ENCODE measurements at regions of chr7 and their contacts with region 1.

Region 1: DNA sequence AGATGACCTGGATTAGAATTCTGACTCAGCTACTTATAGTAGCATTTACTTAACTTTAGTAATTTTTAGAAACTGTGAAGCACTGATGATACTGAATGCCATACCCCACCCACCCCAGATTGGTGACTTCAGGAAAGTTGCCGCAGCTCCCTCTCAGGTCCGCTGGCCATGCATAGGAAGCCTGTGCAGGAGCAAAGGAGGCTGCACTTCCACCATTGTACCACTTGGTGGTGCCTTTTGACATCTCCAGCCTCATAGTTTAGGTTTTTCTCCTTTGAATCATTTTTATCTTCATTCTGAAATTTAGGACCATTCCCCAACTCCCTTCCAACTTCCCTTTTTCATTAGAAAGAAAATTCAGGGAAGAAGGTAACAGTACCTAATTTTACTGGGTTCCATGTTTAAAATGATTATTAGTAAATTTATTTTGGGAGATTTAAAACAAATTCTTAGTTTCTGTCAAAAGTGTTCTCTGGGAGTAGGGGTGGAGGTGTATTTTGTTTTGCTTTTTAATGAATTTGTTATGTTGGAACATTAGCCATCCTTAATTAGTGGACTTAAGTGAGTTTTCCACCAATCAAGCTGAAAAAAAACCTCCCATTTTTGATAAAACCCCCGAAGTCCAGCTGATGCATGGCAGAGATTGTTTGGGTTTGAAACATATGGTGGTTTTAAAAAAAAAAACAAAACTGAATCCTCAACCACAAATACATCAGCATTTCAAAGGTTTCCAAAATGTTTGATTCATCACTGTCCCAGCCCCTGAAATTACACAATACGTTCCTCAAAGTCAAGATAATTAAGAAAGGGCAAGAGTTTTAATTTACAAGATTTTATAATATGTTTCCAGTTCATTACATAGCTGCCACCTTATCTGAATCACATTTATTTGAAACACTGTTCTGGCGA is 109.6 kb downstream of the WNT2 start:
- DNase-seq: no peak
- H3K4me3 ChIP-seq: no peak overlapping the region
- H3K27ac ChIP-seq: no peak overlapping the region
- H3K27me3 ChIP-seq: no peaks in the 10 kb centered on the region
- CTCF ChIP-seq: peak; percentile 98

Region 2: DNA sequence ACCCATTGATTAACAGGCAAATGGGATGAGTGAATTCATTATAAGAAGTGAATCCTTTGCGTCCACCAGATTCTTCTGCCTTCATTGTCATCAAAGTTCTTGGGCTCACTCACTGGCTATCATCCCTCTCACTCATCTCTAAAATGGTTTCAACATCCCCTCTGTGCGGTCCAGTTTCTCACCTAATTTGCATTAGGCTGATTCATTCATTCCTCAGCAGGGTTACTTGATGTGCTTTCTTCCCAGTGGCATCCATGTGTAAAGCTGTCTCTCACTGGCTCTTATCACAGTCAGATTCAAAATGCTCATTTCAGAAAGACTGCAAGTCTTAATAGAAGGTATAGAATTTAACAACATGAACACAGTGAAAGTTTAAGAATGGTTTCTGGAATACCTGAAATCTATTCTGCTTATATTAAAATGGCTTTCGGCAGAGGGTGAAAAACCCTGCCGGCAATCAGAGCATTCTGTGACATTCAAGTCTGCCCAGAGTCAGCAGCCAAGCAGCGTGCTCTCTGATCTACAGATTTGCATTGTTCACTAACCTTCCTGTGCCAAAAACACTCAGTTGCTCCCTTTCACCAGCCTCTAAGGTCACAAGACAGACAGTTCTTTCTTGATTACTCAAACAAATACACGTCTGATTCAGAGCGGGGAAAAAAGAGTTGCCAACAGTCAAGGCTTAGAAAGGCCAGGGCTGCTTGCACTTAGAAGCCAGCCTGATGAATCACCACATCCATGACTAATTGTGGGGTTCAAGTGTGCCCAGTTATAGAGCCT is 896.2 kb before region 1 on chr7:
- CTCF ChIA-PET with region 1: no interaction called
- POLR2A ChIA-PET with region 1: no interaction called
- DNase-seq: peak; percentile 90
- H3K4me3 ChIP-seq: peak overlapping the region; percentile 18; the same call in 1 of the 2 replicates
- H3K27ac ChIP-seq: peak overlapping the region; percentile 79
- H3K27me3 ChIP-seq: no peaks in the 10 kb centered on the region
- CTCF ChIP-seq: no peak

Region 3: DNA sequence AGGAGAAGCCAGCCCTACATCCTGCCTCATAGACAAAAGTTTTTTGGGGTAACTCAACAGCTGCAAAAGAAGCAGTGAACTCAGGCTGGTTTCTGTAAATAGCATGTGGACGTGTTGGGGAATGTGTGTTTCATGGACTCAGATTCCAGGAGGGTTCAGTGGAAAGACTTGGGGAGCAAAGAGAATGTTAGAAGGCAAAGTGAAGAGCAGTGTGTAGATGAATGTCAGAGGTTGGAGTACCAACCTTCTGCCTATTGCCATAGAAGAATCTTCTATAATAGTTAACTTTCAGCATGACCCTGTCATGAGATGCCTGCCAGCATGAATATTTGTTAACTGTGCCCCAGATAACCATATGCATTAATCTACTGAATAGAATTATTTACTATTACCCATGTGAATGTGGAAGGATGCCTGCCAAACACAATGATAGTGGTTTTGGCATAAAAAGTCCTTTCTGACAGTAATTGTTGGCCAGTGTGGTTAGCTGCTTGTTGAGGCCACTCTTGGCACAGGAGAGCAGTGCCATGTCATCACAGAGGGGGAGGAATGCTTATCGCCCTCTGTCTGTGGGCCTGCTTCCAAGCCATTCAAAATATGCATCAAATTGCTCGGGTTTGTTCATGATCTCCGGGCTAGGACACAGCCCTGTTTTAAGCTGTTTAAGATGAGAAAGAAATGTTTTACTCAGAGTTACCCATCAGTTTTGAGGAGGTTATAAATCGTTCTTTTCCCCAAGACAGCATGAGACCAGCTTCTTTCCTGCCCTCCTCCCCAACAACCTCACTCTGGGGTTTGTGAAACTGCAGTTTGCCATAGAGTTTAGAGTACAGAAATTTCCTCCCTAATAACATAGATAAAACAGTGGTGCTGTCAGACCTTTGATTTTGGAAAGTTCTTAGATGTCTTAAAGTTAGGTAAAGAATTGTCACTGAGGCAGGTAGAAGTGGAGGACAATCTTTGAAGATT is 55.7 kb before region 1 on chr7:
- CTCF ChIA-PET with region 1: interaction called, 16 read pairs
- POLR2A ChIA-PET with region 1: no interaction called
- DNase-seq: peak; percentile 59
- H3K4me3 ChIP-seq: no peak overlapping the region
- H3K27ac ChIP-seq: peak overlapping the region; percentile 49
- H3K27me3 ChIP-seq: no peaks in the 10 kb centered on the region
- CTCF ChIP-seq: peak; percentile 48

Region 4: GRCh38 chr7:117230276-117231046 is 17.2 kb after region 1 on chr7:
- CTCF ChIA-PET with region 1: interaction called, 21 read pairs
- POLR2A ChIA-PET with region 1: interaction called, 6 read pairs
- DNase-seq: peak; percentile 83
- H3K4me3 ChIP-seq: no peak overlapping the region
- H3K27ac ChIP-seq: peak overlapping the region; percentile 92
- H3K27me3 ChIP-seq: no peaks in the 10 kb centered on the region
- CTCF ChIP-seq: no peak

Region 5: GRCh38 chr7:117338020-117338419 is 124.8 kb after region 1 on chr7:
- CTCF ChIA-PET with region 1: interaction called, 17 read pairs
- POLR2A ChIA-PET with region 1: no interaction called
- DNase-seq: no peak
- H3K4me3 ChIP-seq: no peak overlapping the region
- H3K27ac ChIP-seq: no peak overlapping the region
- H3K27me3 ChIP-seq: no peaks in the 10 kb centered on the region
- CTCF ChIP-seq: peak; percentile 22; the same call in 1 of the 2 replicates

Region 6: DNA sequence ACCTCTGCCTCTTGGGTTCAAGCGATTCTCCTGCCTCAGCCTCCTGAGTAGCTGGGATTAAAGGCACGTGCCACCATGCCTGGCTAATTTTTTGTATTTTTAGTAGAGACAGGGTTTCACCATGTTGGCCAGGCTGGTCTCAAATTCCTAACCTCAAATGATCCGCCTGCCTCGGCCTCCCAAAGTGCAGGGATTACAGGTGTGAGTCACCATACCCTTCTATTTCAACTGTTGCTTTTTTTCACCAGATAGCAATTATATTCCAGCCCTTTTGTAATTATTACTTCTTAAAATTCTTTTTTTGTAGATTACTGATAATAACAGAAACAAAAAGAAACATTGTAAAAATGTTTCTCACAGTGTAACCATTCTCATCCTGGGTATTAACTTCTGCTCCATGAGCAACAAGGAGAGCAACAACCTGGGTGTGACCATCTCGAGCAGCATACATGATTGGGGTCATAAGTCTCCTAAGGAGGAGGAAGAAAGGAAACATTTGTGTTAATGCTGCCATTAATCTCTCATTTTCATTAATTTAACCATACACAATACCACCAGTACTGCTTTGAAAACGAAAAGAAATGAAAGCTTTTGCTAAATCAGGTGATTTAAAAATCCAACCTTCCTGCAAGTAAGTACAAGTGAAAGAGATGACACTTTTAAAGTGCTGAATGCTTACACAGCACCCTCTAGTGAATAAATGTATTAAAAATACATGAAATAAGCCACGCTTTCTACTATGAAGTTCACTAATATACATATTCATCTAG is 172.3 kb after region 1 on chr7:
- CTCF ChIA-PET with region 1: interaction called, 41 read pairs
- POLR2A ChIA-PET with region 1: no interaction called
- DNase-seq: no peak
- H3K4me3 ChIP-seq: no peak overlapping the region
- H3K27ac ChIP-seq: no peak overlapping the region
- H3K27me3 ChIP-seq: no peaks in the 10 kb centered on the region
- CTCF ChIP-seq: peak; percentile 57

Region 7: GRCh38 chr7:117448655-117449054 is 235.4 kb after region 1 on chr7:
- CTCF ChIA-PET with region 1: no interaction called
- POLR2A ChIA-PET with region 1: no interaction called
- DNase-seq: no peak
- H3K4me3 ChIP-seq: no peak overlapping the region
- H3K27ac ChIP-seq: no peak overlapping the region
- H3K27me3 ChIP-seq: peaks cover 5% of the 10 kb centered on the region
- CTCF ChIP-seq: no peak

Measured in AG04450 (cell line).